HEK293 (cell line): ENCODE measurements at regions of chr7 and their contacts with region 1.

Region 1: GRCh38 chr7:95916573-95917297 is 144.4 kb downstream of the DYNC1I1 start:
- H3K4me3 ChIP-seq: no peak overlapping the region
- H3K27ac ChIP-seq: no peak overlapping the region
- H3K4me1 ChIP-seq: no peaks in the 10 kb centered on the region
- CTCF ChIP-seq: peak; percentile 74

Region 2: GRCh38 chr7:95905165-95905564 is 11.6 kb before region 1 on chr7:
- CTCF ChIA-PET with region 1: interaction called, 27 read pairs
- POLR2A ChIA-PET with region 1: no interaction called
- H3K4me3 ChIP-seq: no peak overlapping the region
- H3K27ac ChIP-seq: no peak overlapping the region
- H3K4me1 ChIP-seq: no peaks in the 10 kb centered on the region
- CTCF ChIP-seq: no peak